B cell (primary cell): ENCODE measurements at regions of chr12 and their contacts with region 1.

Region 1: GRCh38 chr12:110048242-110049027 is at the start of gene C12orf76:
- DNase-seq: peak; percentile 96
- ATAC-seq: peak; percentile 98
- H3K4me3 ChIP-seq: peak within 1 kb of the TSS; percentile 66 to 95 (median 74)
- H3K4me3 Mint-ChIP-seq: peak within 1 kb of the TSS; percentile 91
- H3K27ac ChIP-seq: peak within 1 kb of the TSS; percentile 86 to 89
- H3K27ac Mint-ChIP-seq: peak within 1 kb of the TSS; percentile 98
- H3K4me1 ChIP-seq: peaks cover 23 to 44% of the 10 kb centered on the region in 2 donors
- H3K4me1 Mint-ChIP-seq: peaks cover 44% of the 10 kb centered on the region
- H3K27me3 ChIP-seq: no peaks in the 10 kb centered on the region
- H3K27me3 Mint-ChIP-seq: no peaks in the 10 kb centered on the region
- CTCF ChIP-seq: no peak
- total RNA-seq, gene C12orf76: 26.2 and 28.5 TPM in 2 replicates

Region 2: GRCh38 chr12:109870648-109871047 is 177.8 kb before region 1 on chr12:
- CTCF ChIA-PET with region 1: no interaction called
- POLR2A ChIA-PET with region 1: no interaction called
- intact Hi-C with region 1: no loop called
- DNase-seq: no peak
- ATAC-seq: no peak
- H3K4me3 ChIP-seq: no peak overlapping the region
- H3K4me3 Mint-ChIP-seq: no peak overlapping the region
- H3K27ac ChIP-seq: no peak overlapping the region
- H3K27ac Mint-ChIP-seq: no peak overlapping the region
- H3K4me1 ChIP-seq: peaks cover 7 to 8% of the 10 kb centered on the region in 2 donors
- H3K4me1 Mint-ChIP-seq: peaks cover 19% of the 10 kb centered on the region
- H3K27me3 ChIP-seq: no peaks in the 10 kb centered on the region
- H3K27me3 Mint-ChIP-seq: no peaks in the 10 kb centered on the region
- CTCF ChIP-seq: no peak

Region 3: GRCh38 chr12:109920261-109920780 is 128.1 kb before region 1 on chr12:
- CTCF ChIA-PET with region 1: no interaction called
- POLR2A ChIA-PET with region 1: no interaction called
- intact Hi-C with region 1: no loop called
- DNase-seq: no peak
- ATAC-seq: no peak
- H3K4me3 ChIP-seq: no peak overlapping the region
- H3K4me3 Mint-ChIP-seq: no peak overlapping the region
- H3K27ac ChIP-seq: no peak overlapping the region
- H3K27ac Mint-ChIP-seq: no peak overlapping the region
- H3K4me1 ChIP-seq: peaks cover 0 to 8% of the 10 kb centered on the region in 2 donors
- H3K4me1 Mint-ChIP-seq: peaks cover 12% of the 10 kb centered on the region
- H3K27me3 ChIP-seq: no peaks in the 10 kb centered on the region
- H3K27me3 Mint-ChIP-seq: no peaks in the 10 kb centered on the region
- CTCF ChIP-seq: no peak

Region 4: GRCh38 chr12:109934026-109934425 is 114.4 kb before region 1 on chr12:
- CTCF ChIA-PET with region 1: no interaction called
- POLR2A ChIA-PET with region 1: no interaction called
- intact Hi-C with region 1: no loop called
- DNase-seq: no peak
- ATAC-seq: no peak
- H3K4me3 ChIP-seq: no peak overlapping the region
- H3K4me3 Mint-ChIP-seq: no peak overlapping the region
- H3K27ac ChIP-seq: no peak overlapping the region
- H3K27ac Mint-ChIP-seq: no peak overlapping the region
- H3K4me1 ChIP-seq: no peaks in the 10 kb centered on the region
- H3K4me1 Mint-ChIP-seq: no peaks in the 10 kb centered on the region
- H3K27me3 ChIP-seq: no peaks in the 10 kb centered on the region
- H3K27me3 Mint-ChIP-seq: no peaks in the 10 kb centered on the region
- CTCF ChIP-seq: no peak

Region 5: GRCh38 chr12:109944561-109945359 is 103.7 kb before region 1 on chr12:
- CTCF ChIA-PET with region 1: no interaction called
- POLR2A ChIA-PET with region 1: no interaction called
- intact Hi-C with region 1: no loop called
- DNase-seq: no peak
- ATAC-seq: no peak
- H3K4me3 ChIP-seq: no peak overlapping the region
- H3K4me3 Mint-ChIP-seq: no peak overlapping the region
- H3K27ac ChIP-seq: no peak overlapping the region
- H3K27ac Mint-ChIP-seq: no peak overlapping the region
- H3K4me1 ChIP-seq: peaks cover 19 to 20% of the 10 kb centered on the region in 2 donors
- H3K4me1 Mint-ChIP-seq: peaks cover 31% of the 10 kb centered on the region
- H3K27me3 ChIP-seq: no peaks in the 10 kb centered on the region
- H3K27me3 Mint-ChIP-seq: no peaks in the 10 kb centered on the region
- CTCF ChIP-seq: no peak

Region 6: DNA sequence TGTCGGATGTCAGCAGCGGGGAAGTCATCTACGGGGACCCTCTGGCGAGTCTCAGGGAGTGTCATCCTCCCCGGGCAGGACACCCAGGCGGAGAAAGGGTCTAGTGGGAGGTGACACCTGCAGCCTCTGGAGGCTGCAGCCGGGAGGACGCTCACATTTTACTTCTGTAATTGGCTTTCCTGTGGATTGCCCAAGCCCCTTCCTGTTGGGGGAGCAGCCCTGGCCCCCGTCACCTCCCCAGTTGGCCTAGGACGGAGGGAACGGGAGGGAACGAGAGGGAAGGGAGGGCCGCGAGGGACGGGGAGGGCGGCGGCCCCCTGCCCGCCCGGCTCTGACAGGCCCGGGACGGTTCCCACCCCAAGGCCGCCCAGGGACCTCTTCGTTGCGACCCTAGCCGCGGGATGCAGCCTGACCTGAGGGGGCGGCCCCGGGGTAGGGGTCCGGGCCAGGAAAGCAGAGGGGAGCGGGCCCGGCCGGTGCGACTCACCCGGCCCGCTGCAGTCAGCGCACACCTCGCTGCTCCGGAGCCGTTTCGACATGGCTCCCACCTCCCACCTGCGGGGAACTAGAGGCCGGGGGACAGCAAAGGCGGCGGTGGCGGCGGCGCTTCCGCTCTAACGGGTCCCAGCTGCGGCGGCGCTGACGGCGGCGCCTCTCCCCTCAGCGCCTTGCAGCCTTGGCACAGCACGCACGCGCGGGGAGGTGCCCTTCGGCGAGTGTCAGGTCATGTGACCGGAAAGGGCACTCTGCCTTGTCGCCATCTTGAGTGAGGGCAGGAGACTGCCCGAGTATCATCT is 52.6 kb before region 1 on chr12 and contains the start of gene GIT2:
- CTCF ChIA-PET with region 1: no interaction called
- POLR2A ChIA-PET with region 1: no interaction called
- intact Hi-C with region 1: loop called (anchors 1 kb)
- DNase-seq: peak; percentile 95
- ATAC-seq: peak; percentile 69
- H3K4me3 ChIP-seq: peak within 1 kb of the TSS; percentile 68 to 99 (median 74)
- H3K4me3 Mint-ChIP-seq: peak within 1 kb of the TSS; percentile 90
- H3K27ac ChIP-seq: peak within 1 kb of the TSS; percentile 69 to 90
- H3K27ac Mint-ChIP-seq: peak within 1 kb of the TSS; percentile 91
- H3K4me1 ChIP-seq: peaks cover 39 to 47% of the 10 kb centered on the region in 2 donors
- H3K4me1 Mint-ChIP-seq: peaks cover 67% of the 10 kb centered on the region
- H3K27me3 ChIP-seq: no peaks in the 10 kb centered on the region
- H3K27me3 Mint-ChIP-seq: no peaks in the 10 kb centered on the region
- CTCF ChIP-seq: no peak
- total RNA-seq, gene GIT2: 163 and 177 TPM in 2 replicates

Region 7: GRCh38 chr12:110012137-110012536 is 36.3 kb before region 1 on chr12:
- CTCF ChIA-PET with region 1: interaction called, 3 read pairs
- POLR2A ChIA-PET with region 1: no interaction called
- intact Hi-C with region 1: loop called (anchors 1 kb)
- DNase-seq: peak; percentile 94
- ATAC-seq: peak; percentile 95
- H3K4me3 ChIP-seq: peak overlapping the region in 3 of 5 experiments; percentile 40 to 53 (median 43)
- H3K4me3 Mint-ChIP-seq: peak overlapping the region; percentile 91
- H3K27ac ChIP-seq: peak overlapping the region; percentile 89 to 97
- H3K27ac Mint-ChIP-seq: peak overlapping the region; percentile 95
- H3K4me1 ChIP-seq: peaks cover 57 to 69% of the 10 kb centered on the region in 2 donors
- H3K4me1 Mint-ChIP-seq: peaks cover 64% of the 10 kb centered on the region
- H3K27me3 ChIP-seq: no peaks in the 10 kb centered on the region
- H3K27me3 Mint-ChIP-seq: no peaks in the 10 kb centered on the region
- CTCF ChIP-seq: no peak

Region 8: DNA sequence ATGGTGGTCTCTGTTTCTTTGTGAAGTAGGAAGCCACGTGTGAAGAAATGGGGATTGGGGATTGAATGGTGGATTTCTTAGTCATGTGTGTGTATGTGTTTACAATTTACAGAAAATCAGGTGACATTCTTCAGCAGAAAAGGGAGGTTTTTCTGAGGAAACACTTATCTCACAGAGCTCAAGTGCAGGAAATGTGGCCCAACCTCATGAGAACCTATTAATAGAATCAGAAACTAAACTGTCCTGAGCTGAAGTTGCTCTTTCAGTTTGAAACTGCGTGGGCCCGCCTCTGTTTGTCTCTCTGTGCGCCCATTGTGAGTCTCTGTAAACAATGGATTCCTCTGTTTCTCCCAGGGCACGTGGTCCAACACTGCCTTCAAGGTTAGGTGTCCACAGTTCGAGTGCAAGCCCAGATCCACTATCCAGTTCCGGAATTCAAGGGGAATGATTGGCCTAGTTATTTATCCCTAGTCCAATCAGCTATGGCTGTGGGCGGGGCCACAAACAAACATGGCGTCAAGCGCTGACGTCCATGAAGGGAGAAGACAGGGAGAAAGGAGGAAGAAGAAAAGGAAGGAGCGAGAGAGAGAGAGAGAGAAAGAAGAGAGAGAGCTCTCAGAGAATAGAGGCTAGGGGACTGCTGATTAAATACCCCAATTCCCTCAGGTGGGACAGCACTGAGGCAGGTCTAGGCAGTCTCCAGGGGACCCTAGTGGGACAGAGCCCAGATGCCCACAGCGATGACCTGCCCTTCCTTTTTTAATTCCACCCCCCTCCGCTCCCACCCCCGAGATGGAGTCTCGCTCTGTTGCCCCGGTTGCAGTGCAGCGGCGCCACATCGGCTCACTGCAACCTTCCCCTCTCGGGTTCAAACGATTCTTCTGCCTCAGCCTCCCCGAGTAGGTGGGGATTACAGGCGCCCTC is 31.3 kb after region 1 on chr12:
- CTCF ChIA-PET with region 1: no interaction called
- POLR2A ChIA-PET with region 1: interaction called, 3 read pairs
- intact Hi-C with region 1: loop called (anchors 1 kb)
- DNase-seq: peak; percentile 88
- ATAC-seq: peak; percentile 95
- H3K4me3 ChIP-seq: peak overlapping the region; percentile 47 to 60 (median 48)
- H3K4me3 Mint-ChIP-seq: peak overlapping the region; percentile 87
- H3K27ac ChIP-seq: peak overlapping the region; percentile 87 to 90
- H3K27ac Mint-ChIP-seq: peak overlapping the region; percentile 98
- H3K4me1 ChIP-seq: peaks cover 19 to 23% of the 10 kb centered on the region in 2 donors
- H3K4me1 Mint-ChIP-seq: peaks cover 18% of the 10 kb centered on the region
- H3K27me3 ChIP-seq: no peaks in the 10 kb centered on the region
- H3K27me3 Mint-ChIP-seq: no peaks in the 10 kb centered on the region
- CTCF ChIP-seq: no peak

Region 9: GRCh38 chr12:110100315-110100970 is 52.0 kb after region 1 on chr12:
- CTCF ChIA-PET with region 1: interaction called, 4 read pairs
- POLR2A ChIA-PET with region 1: no interaction called
- intact Hi-C with region 1: loop called (anchors 1 kb)
- DNase-seq: peak; percentile 91
- ATAC-seq: peak; percentile 98
- H3K4me3 ChIP-seq: peak overlapping the region in 2 of 5 experiments; percentile 15 to 21
- H3K4me3 Mint-ChIP-seq: peak overlapping the region; percentile 67
- H3K27ac ChIP-seq: peak overlapping the region; percentile 72 to 73
- H3K27ac Mint-ChIP-seq: peak overlapping the region; percentile 81
- H3K4me1 ChIP-seq: peaks cover 21 to 22% of the 10 kb centered on the region in 2 donors
- H3K4me1 Mint-ChIP-seq: peaks cover 24% of the 10 kb centered on the region
- H3K27me3 ChIP-seq: no peaks in the 10 kb centered on the region
- H3K27me3 Mint-ChIP-seq: no peaks in the 10 kb centered on the region
- CTCF ChIP-seq: peak; percentile 93

Region 10: DNA sequence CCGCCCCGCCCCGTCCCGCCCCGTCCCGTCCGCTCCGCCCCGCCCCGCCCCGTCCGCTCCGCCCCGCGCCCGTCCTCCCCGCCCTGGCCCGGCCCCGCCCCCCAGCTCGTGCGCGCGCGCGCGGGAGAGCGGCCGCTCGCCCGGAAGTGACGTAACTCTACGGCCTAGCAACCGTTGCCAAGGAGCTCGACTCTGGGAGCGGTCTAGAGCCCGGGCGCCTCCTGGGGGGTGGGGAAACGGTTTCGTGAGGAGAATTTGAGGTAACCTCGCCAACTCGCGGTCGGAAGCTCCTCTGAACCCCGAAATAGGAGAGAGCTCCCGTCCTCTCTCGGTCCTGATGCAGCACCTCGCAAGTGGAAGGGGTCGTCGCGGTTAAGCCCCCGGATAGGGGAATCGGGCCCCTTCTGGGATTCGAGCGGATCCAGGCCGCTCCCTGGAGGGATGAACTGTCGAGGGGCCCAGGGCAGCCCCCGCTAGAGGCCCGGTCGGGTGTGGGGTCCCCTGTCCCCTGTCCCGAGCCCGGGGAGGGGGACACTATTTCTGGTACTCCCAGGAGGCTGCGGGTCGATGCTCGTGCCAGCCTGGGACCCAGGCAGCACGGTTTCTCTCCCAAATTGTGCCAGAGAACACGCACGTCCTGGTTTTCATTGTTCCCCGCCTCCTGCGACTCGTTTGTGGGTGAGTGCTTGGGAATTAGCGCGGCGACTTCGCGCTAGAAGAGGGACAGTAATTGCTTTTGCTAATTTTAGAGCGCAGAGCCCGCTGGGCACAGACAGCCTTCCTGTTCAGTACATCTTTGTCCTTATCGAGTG is 76.0 kb after region 1 on chr12 and contains the start of gene IFT81:
- CTCF ChIA-PET with region 1: no interaction called
- POLR2A ChIA-PET with region 1: interaction called, 3 read pairs
- intact Hi-C with region 1: loop called (anchors 1 kb)
- DNase-seq: peak; percentile 96
- ATAC-seq: peak; percentile 94
- H3K4me3 ChIP-seq: peak within 1 kb of the TSS; percentile 75 to 98 (median 96)
- H3K4me3 Mint-ChIP-seq: peak within 1 kb of the TSS; percentile 94
- H3K27ac ChIP-seq: peak within 1 kb of the TSS; percentile 25 to 92
- H3K27ac Mint-ChIP-seq: peak within 1 kb of the TSS; percentile 92
- H3K4me1 ChIP-seq: peaks cover 7 to 8% of the 10 kb centered on the region in 2 donors
- H3K4me1 Mint-ChIP-seq: peaks cover 9% of the 10 kb centered on the region
- H3K27me3 ChIP-seq: no peaks in the 10 kb centered on the region
- H3K27me3 Mint-ChIP-seq: no peaks in the 10 kb centered on the region
- CTCF ChIP-seq: no peak
- total RNA-seq, gene IFT81: 6.0 and 6.8 TPM in 2 replicates